Prostate gland (tissue), 2 donors: ENCODE measurements at regions of chr1 and their contacts with region 1.

Region 1: DNA sequence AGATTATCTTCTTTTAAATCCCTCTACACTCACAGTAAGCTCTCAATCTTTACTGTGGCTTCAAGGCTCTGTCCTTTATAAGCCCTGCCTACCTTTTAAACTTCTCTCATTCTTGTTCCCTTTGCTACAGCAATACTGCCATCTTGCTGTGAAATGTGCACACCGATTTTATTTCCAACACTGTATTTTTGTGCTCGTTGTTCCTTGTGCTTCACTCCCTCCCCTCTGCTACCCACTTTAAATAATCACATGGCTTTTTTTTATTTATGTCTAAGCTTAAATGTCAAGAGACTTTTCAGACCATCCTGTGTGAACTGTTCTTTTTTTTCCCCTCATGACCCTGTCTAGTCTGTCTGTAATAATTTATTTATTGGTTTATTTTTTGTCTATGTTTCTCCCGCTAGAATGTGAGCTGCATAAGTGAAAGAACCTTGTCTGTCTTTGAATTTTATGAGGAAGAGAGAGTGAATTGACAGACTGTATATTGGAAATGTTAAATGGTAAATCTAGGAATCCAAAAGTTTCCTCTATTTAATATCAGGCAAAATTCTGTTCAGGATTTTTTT is 45.7 kb downstream of the ABCD3 start:
- DNase-seq: peak; percentile 27
- H3K4me3 ChIP-seq: no peak overlapping the region
- H3K27ac ChIP-seq: no peak overlapping the region
- H3K4me1 ChIP-seq: no peaks in the 10 kb centered on the region
- H3K27me3 ChIP-seq: no peaks in the 10 kb centered on the region
- CTCF ChIP-seq: peak in 3 of 4 experiments; percentile 48 to 65 (median 63)
- POLR2A ChIP-seq: no peak

Region 2: GRCh38 chr1:94335950-94336349 is 127.9 kb before region 1 on chr1:
- intact Hi-C with region 1: loop called (anchors 10 kb)
- DNase-seq: peak; percentile 88
- H3K4me3 ChIP-seq: no peak overlapping the region
- H3K27ac ChIP-seq: no peak overlapping the region
- H3K4me1 ChIP-seq: no peaks in the 10 kb centered on the region
- H3K27me3 ChIP-seq: no peaks in the 10 kb centered on the region
- CTCF ChIP-seq: peak; percentile 68 to 98 (median 92)
- POLR2A ChIP-seq: no peak

Region 3: DNA sequence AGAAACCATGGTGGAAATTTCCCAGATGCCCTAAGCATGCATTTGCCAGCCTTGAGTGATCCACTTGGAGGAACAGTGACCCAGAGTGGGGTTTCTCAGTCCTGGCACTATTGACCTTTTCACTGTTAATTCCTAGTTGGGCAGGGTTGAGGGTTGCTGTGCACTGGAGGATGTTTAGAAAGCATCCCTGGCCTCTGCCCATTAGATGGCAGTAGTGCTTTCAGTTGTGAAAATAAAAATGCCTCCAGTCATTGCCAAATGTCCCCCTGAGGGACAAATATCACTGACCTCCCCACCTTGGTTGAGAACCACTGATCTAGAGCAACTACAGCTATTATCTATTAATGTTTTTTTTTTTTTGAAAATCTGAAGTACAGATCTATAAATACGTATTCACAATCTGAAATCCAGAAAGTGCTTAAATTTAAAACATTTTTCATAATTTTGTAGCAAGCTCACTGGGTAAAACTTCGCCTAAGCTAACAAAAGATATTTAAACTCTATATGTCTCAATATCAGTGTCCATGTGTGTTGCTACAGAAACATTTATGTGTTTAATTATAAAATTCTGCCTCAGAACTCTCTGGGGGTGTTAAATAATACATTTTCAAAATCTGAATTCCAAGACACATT is 50.4 kb after region 1 on chr1:
- intact Hi-C with region 1: no loop called
- DNase-seq: no peak
- H3K4me3 ChIP-seq: no peak overlapping the region
- H3K27ac ChIP-seq: no peak overlapping the region
- H3K4me1 ChIP-seq: no peaks in the 10 kb centered on the region
- H3K27me3 ChIP-seq: no peaks in the 10 kb centered on the region
- CTCF ChIP-seq: peak; percentile 20 to 47 (median 39)
- POLR2A ChIP-seq: no peak